Sciatic nerve (tissue), 2 donors: ENCODE measurements at regions of chr20 and their contacts with region 1.

Region 1: GRCh38 chr20:21505161-21505809 is 8.6 kb downstream of the NKX2-2 start:
- DNase-seq: peak; percentile 80
- ATAC-seq: peak; percentile 45

Region 2: GRCh38 chr20:20860078-20860806 is 645.0 kb before region 1 on chr20:
- intact Hi-C with region 1: loop called (anchors 10 kb)
- DNase-seq: peak; percentile 96
- ATAC-seq: peak; percentile 86

Region 3: GRCh38 chr20:21235484-21236445 is 269.5 kb before region 1 on chr20:
- intact Hi-C with region 1: loop called (anchors 10 kb)
- DNase-seq: peak; percentile 74
- ATAC-seq: peak; percentile 68